Endothelial cell of umbilical vein (primary cell): ENCODE measurements at regions of chr14 and their contacts with region 1.

Region 1: GRCh38 chr14:23057757-23058653 is 685 bp upstream of the CDH24 start:
- DNase-seq: peak; percentile 87
- H3K4me3 ChIP-seq: peak overlapping the region; percentile 28 to 62 (median 49)
- H3K27ac ChIP-seq: peak overlapping the region; percentile 48
- H3K4me1 ChIP-seq: peaks cover 31% of the 10 kb centered on the region
- H3K27me3 ChIP-seq: no peaks in the 10 kb centered on the region
- CTCF ChIP-seq: peak; percentile 97
- POLR2A ChIP-seq: peak; percentile 33

Region 2: GRCh38 chr14:22929104-22929847 is 128.7 kb before region 1 on chr14 and contains the start of gene PRMT5:
- CTCF ChIA-PET with region 1: interaction called, 7 read pairs
- POLR2A ChIA-PET with region 1: no interaction called
- dilution Hi-C with region 1: no loop called
- intact Hi-C with region 1: loop called (anchors 5 kb)
- DNase-seq: peak; percentile 100
- H3K4me3 ChIP-seq: peak within 1 kb of the TSS; percentile 66 to 95 (median 81)
- H3K27ac ChIP-seq: peak within 1 kb of the TSS; percentile 68
- H3K4me1 ChIP-seq: peaks cover 16% of the 10 kb centered on the region
- H3K27me3 ChIP-seq: no peaks in the 10 kb centered on the region
- CTCF ChIP-seq: no peak
- POLR2A ChIP-seq: peak; percentile 64
- total RNA-seq, gene PRMT5: 67.2 and 73.1 TPM in 2 replicates

Region 3: GRCh38 chr14:23006544-23007419 is 51.2 kb before region 1 on chr14:
- CTCF ChIA-PET with region 1: interaction called, 29 read pairs
- POLR2A ChIA-PET with region 1: interaction called, 7 read pairs
- dilution Hi-C with region 1: no loop called
- intact Hi-C with region 1: no loop called
- DNase-seq: peak; percentile 99
- H3K4me3 ChIP-seq: peak overlapping the region; percentile 38 to 78 (median 56)
- H3K27ac ChIP-seq: peak overlapping the region; percentile 89
- H3K4me1 ChIP-seq: peaks cover 29% of the 10 kb centered on the region
- H3K27me3 ChIP-seq: no peaks in the 10 kb centered on the region
- CTCF ChIP-seq: peak; percentile 7 to 34
- POLR2A ChIP-seq: peak; percentile 97

Region 4: DNA sequence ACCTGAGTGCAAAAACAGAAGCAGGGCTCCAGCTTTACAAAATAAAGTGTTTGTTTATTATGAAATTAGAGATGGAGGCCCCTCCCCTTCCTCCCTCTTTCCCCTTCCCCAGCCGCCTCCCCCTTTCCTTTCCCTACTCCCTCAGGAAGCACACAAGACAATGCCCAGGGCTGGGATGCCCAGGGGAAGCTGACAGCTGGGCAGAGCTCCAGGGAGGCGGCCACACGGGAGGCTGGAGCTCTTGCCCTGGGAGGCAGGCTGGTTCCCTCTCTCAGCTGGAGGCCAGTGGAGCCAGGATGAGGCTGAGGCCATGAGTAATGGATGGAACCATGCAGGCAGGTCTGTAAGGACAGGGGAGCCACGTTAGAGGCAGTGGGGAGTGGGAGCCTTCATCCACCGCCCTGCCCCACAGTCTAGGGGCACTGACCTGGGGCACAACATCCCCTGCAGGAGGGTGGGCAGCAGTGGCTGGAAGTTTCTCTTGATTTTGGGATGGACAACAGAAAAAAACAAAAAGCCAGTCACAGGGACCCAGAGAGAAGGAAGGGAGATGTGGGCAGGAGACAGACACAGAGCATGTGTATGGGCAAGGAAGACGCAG is 10.9 kb before region 1 on chr14:
- CTCF ChIA-PET with region 1: interaction called, 25 read pairs
- POLR2A ChIA-PET with region 1: interaction called, 5 read pairs
- dilution Hi-C with region 1: no loop called
- intact Hi-C with region 1: loop called (anchors 1 kb)
- DNase-seq: peak; percentile 81
- H3K4me3 ChIP-seq: no peak overlapping the region
- H3K27ac ChIP-seq: peak overlapping the region; percentile 37
- H3K4me1 ChIP-seq: peaks cover 41% of the 10 kb centered on the region
- H3K27me3 ChIP-seq: no peaks in the 10 kb centered on the region
- CTCF ChIP-seq: no peak
- POLR2A ChIP-seq: no peak

Region 5: GRCh38 chr14:23095196-23096108 is 37.4 kb after region 1 on chr14 and contains the start of gene C14orf119:
- CTCF ChIA-PET with region 1: interaction called, 12 read pairs
- POLR2A ChIA-PET with region 1: interaction called, 4 read pairs
- dilution Hi-C with region 1: no loop called
- intact Hi-C with region 1: no loop called
- DNase-seq: peak; percentile 100
- H3K4me3 ChIP-seq: peak within 1 kb of the TSS; percentile 87 to 99 (median 94)
- H3K27ac ChIP-seq: peak within 1 kb of the TSS; percentile 89
- H3K4me1 ChIP-seq: peaks cover 28% of the 10 kb centered on the region
- H3K27me3 ChIP-seq: no peaks in the 10 kb centered on the region
- CTCF ChIP-seq: no peak
- POLR2A ChIP-seq: peak; percentile 66
- total RNA-seq, gene C14orf119: 55.5 and 58.3 TPM in 2 replicates

Region 6: GRCh38 chr14:23195550-23196101 is 137.6 kb after region 1 on chr14:
- CTCF ChIA-PET with region 1: no interaction called
- POLR2A ChIA-PET with region 1: no interaction called
- dilution Hi-C with region 1: no loop called
- intact Hi-C with region 1: no loop called
- DNase-seq: no peak
- H3K4me3 ChIP-seq: no peak overlapping the region
- H3K27ac ChIP-seq: no peak overlapping the region
- H3K4me1 ChIP-seq: no peaks in the 10 kb centered on the region
- H3K27me3 ChIP-seq: peaks cover 2 to 10% of the 10 kb centered on the region in 2 experiments
- CTCF ChIP-seq: no peak
- POLR2A ChIP-seq: no peak